ENCODE measurements at regions of chr3 and their contacts with region 1.

Region 1: GRCh38 chr3:98824256-98824655 is 61.1 kb downstream of the ST3GAL6 start:
- DNase-seq: no peak
- ATAC-seq: peak; percentile 56
- H3K4me3 ChIP-seq: no peak overlapping the region
- H3K27ac ChIP-seq: peak overlapping the region; percentile 35; the same call in 1 of the 2 replicates
- H3K4me1 ChIP-seq: peaks cover 4 to 28% of the 10 kb centered on the region in 2 experiments; a peak in 2 of 4 replicates
- H3K27me3 ChIP-seq: no peaks in the 10 kb centered on the region
- CTCF ChIP-seq: peak; percentile 38 to 54 (median 47); a peak in 5 of 6 replicates
- POLR2A ChIP-seq: no peak
- RAD21 ChIP-seq: peak; percentile 79

Region 2: GRCh38 chr3:97579365-97579764 is 1244.9 kb before region 1 on chr3:
- CTCF ChIA-PET with region 1: no interaction called
- POLR2A ChIA-PET with region 1: no interaction called
- RAD21 ChIA-PET with region 1: no interaction called
- intact Hi-C with region 1: no loop called
- DNase-seq: no peak
- ATAC-seq: no peak
- H3K4me3 ChIP-seq: no peak overlapping the region
- H3K27ac ChIP-seq: no peak overlapping the region
- H3K4me1 ChIP-seq: no peaks in the 10 kb centered on the region
- H3K27me3 ChIP-seq: no peaks in the 10 kb centered on the region
- CTCF ChIP-seq: no peak
- POLR2A ChIP-seq: no peak
- RAD21 ChIP-seq: no peak

Region 3: DNA sequence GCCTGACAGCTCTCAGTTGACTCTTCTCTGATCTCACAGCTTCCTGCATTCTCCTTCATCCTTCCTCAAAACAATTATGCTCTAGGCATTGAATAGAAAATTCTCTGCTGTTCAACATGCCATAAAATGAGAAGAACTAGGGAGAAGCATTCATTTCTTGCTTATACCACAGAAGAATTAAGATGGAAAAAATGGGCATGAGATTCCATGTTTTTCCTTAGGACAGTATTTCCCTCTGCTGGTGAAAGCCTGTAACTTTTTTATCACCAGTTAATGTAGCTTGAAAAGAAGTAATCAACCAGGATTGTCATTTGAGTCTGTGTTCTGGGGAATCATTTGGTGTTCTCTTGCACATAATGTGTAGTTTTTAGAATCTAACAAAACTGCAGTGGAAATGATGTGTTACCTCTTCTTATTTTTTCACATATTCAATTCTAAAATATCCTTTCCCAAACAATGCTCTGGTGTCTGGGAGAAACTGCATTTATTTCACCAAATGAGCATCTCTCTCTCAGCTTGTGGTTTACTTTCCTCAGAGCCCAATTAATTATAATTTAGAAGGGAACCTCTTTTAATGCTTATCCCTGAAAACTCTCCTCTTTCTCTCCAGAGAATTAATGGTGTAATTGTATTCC is 170.0 kb after region 1 on chr3:
- CTCF ChIA-PET with region 1: interaction called, 10 read pairs
- POLR2A ChIA-PET with region 1: no interaction called
- RAD21 ChIA-PET with region 1: no interaction called
- intact Hi-C with region 1: loop called (anchors 1 kb)
- DNase-seq: peak; percentile 52
- ATAC-seq: peak; percentile 78
- H3K4me3 ChIP-seq: no peak overlapping the region
- H3K27ac ChIP-seq: no peak overlapping the region
- H3K4me1 ChIP-seq: peaks cover 0 to 16% of the 10 kb centered on the region in 2 experiments; a peak in 1 of 4 replicates
- H3K27me3 ChIP-seq: no peaks in the 10 kb centered on the region
- CTCF ChIP-seq: peak; percentile 59 to 84 (median 66); a peak in 5 of 6 replicates
- POLR2A ChIP-seq: no peak
- RAD21 ChIP-seq: peak; percentile 87

Region 4: DNA sequence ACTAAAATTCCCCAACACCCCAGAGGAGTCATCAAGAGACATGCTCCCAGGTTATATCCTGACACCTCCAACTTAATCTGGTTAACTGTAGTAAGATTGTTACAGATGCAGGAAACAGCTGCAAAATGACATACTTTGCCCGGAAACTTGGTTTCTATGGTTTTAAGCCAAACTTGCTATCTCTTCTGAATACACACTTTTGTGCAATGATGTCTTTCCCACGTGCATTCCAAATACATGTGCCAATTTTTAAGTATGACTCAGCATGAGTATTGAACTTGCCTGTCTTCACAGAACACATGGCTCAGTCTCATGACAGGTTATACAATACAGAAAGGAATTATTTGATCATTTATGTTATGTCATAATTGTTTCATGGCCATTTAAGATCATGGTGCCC is 284.3 kb after region 1 on chr3:
- CTCF ChIA-PET with region 1: no interaction called
- POLR2A ChIA-PET with region 1: no interaction called
- RAD21 ChIA-PET with region 1: no interaction called
- intact Hi-C with region 1: loop called (anchors 10 kb)
- DNase-seq: no peak
- ATAC-seq: no peak
- H3K4me3 ChIP-seq: no peak overlapping the region
- H3K27ac ChIP-seq: no peak overlapping the region
- H3K4me1 ChIP-seq: peaks cover 0 to 5% of the 10 kb centered on the region in 2 experiments; a peak in 1 of 4 replicates
- H3K27me3 ChIP-seq: no peaks in the 10 kb centered on the region; the same call in 1 of the 2 replicates
- CTCF ChIP-seq: no peak
- POLR2A ChIP-seq: no peak
- RAD21 ChIP-seq: no peak